Endothelial cell of umbilical vein (primary cell): ENCODE measurements at regions of chr13 and their contacts with region 1.

Region 1: DNA sequence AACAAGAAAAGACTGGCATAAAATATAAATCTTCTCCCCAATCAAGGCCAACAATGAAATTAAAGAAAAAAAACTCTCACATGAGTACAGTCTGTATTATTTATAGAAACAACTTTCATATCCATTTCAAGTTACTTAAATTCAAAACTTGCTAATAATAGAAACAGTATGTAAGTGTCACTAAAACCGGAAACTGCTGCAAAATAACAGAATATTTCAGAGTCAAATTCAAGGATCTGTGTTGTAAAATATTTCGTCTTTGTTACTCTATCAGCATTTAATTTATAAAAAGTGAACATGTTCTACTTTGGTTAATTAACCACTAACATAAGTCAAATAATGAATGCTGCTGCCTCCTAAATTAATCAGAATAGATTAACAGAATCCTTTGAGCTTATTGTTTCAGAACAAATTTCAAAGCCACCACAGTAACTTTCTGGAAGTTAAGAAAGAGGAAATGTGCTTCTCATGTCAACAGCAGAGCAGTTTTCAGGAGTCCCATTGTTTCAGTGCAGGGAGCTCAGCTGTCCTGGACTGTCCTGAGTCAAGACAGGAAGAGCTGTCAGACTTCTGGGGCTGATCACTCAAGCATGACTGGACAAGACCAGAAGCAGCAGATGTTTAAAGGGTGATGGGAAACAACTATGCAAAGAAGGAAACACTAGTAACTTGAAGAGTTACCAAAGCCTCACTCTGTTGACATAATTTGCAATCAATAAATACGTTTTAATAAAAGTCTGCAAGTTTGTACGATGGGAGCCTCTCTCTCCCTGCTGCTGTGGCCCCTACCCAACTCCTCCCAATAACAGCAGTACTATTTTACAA is 76.9 kb downstream of the FOXO1 start:
- DNase-seq: peak; percentile 94
- H3K4me3 ChIP-seq: peak overlapping the region in 1 of 3 experiments; percentile 14
- H3K27ac ChIP-seq: peak overlapping the region; percentile 87
- H3K4me1 ChIP-seq: peaks cover 69% of the 10 kb centered on the region
- H3K27me3 ChIP-seq: no peaks in the 10 kb centered on the region
- CTCF ChIP-seq: no peak
- POLR2A ChIP-seq: peak; percentile 57

Region 2: GRCh38 chr13:40503966-40504591 is 85.4 kb before region 1 on chr13:
- CTCF ChIA-PET with region 1: no interaction called
- POLR2A ChIA-PET with region 1: no interaction called
- dilution Hi-C with region 1: no loop called
- intact Hi-C with region 1: loop called (anchors 1 kb)
- DNase-seq: peak; percentile 99
- H3K4me3 ChIP-seq: no peak overlapping the region
- H3K27ac ChIP-seq: peak overlapping the region; percentile 99
- H3K4me1 ChIP-seq: peaks cover 51% of the 10 kb centered on the region
- H3K27me3 ChIP-seq: no peaks in the 10 kb centered on the region
- CTCF ChIP-seq: no peak
- POLR2A ChIP-seq: peak; percentile 74

Region 3: DNA sequence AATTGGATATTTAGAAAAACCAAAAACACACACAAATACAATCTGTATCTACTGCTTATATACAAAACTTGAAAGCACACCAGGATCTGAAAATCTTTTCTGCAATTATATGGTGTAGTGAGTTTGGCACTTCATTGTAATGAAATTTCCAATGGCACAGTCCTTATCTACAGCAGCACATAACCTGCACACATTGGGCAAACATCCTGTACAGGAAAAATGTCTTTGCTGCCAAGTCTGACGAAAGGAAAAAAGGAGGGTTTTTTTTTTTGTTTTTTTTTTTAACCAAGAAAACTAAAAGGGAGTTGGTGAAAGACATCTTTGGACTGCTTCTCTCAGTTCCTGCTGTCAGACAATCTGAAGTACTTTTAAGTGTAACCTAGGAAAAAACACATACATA is 30.8 kb before region 1 on chr13:
- CTCF ChIA-PET with region 1: interaction called, 3 read pairs
- POLR2A ChIA-PET with region 1: no interaction called
- dilution Hi-C with region 1: no loop called
- intact Hi-C with region 1: loop called (anchors 1 kb)
- DNase-seq: peak; percentile 95
- H3K4me3 ChIP-seq: peak overlapping the region in 1 of 3 experiments; percentile 1
- H3K27ac ChIP-seq: peak overlapping the region; percentile 61
- H3K4me1 ChIP-seq: peaks cover 56% of the 10 kb centered on the region
- H3K27me3 ChIP-seq: no peaks in the 10 kb centered on the region
- CTCF ChIP-seq: no peak
- POLR2A ChIP-seq: peak; percentile 35

Region 4: GRCh38 chr13:40613192-40613818 is 23.8 kb after region 1 on chr13:
- CTCF ChIA-PET with region 1: no interaction called
- POLR2A ChIA-PET with region 1: no interaction called
- dilution Hi-C with region 1: no loop called
- intact Hi-C with region 1: loop called (anchors 1 kb)
- DNase-seq: peak; percentile 70
- H3K4me3 ChIP-seq: no peak overlapping the region
- H3K27ac ChIP-seq: peak overlapping the region; percentile 98
- H3K4me1 ChIP-seq: peaks cover 75% of the 10 kb centered on the region
- H3K27me3 ChIP-seq: no peaks in the 10 kb centered on the region
- CTCF ChIP-seq: no peak
- POLR2A ChIP-seq: no peak

Region 5: GRCh38 chr13:41034881-41035280 is 445.4 kb after region 1 on chr13:
- CTCF ChIA-PET with region 1: no interaction called
- POLR2A ChIA-PET with region 1: no interaction called
- dilution Hi-C with region 1: no loop called
- intact Hi-C with region 1: no loop called
- DNase-seq: peak; percentile 70
- H3K4me3 ChIP-seq: no peak overlapping the region
- H3K27ac ChIP-seq: peak overlapping the region; percentile 65
- H3K4me1 ChIP-seq: peaks cover 22% of the 10 kb centered on the region
- H3K27me3 ChIP-seq: no peaks in the 10 kb centered on the region
- CTCF ChIP-seq: no peak
- POLR2A ChIP-seq: no peak

Region 6: DNA sequence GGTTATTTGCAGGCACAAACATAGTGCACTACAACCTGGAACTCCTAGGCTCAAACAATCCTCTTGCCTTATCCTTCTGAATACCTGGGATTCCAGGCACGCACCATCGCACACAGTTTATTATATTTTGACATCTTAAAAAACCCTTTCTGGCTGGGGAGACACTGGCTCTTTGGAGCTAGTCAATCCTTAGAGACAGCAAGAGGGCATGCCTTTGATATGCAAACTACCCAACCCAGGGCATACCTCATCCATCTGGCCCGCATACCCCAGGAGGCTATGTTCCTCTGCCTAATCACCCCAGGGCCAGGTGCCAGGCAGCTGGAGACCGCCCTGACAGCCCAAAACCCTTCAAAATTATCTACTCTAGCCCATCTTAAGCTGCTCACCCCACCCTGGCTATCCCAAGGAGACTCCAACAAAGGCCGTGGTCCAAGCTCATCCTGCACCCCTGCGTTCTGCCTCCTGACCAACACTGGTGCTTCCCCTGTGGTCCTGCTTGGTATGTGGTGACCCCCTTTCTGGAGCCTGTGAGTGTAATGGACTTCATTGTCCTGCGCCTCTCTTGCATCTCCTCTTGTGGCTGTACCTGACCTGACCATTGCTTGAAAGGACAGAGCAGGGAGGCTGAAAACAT is 954.3 kb after region 1 on chr13:
- CTCF ChIA-PET with region 1: no interaction called
- POLR2A ChIA-PET with region 1: no interaction called
- dilution Hi-C with region 1: no loop called
- intact Hi-C with region 1: no loop called
- DNase-seq: no peak
- H3K4me3 ChIP-seq: no peak overlapping the region
- H3K27ac ChIP-seq: no peak overlapping the region
- H3K4me1 ChIP-seq: no peaks in the 10 kb centered on the region
- H3K27me3 ChIP-seq: no peaks in the 10 kb centered on the region
- CTCF ChIP-seq: no peak
- POLR2A ChIP-seq: no peak